Naive thymus-derived CD4-positive, alpha-beta T cell (primary cell): ENCODE measurements at regions of chr1 and their contacts with region 1.

Region 1: DNA sequence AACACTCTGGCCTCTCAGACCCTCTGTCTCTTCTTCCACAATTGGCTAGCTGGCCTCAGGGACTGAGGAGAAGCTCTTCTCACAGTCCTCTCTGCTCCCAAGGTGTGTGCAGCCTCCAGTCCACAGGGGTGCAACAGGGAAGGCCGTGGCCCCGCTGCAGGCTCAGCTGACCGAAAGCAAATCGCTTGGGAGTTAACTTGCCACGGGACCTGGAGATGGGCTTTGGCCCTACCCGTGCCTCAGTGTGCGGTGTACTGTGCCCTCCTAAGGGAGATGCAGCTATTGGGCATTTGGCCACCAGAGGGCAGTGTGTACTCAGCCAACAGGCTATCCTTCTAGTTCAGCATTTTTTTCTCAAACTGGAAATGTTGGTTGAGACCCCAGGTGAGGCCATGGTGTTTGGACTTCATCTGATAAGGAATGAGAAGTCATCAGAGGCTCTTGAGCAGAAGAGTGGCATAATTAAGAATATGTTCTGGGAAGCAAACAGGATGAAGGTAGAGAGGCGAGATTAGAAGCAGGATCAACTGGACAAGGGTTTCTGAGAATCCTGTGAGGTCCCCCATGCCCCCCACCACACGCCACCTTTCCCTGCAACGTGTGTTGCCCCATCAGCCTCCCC is 42.5 kb upstream of the TMEM125 start:
- DNase-seq: peak; percentile 50 to 86 (median 76)
- ATAC-seq: peak; percentile 94
- H3K4me3 ChIP-seq: no peak overlapping the region
- H3K4me3 Mint-ChIP-seq: no peak overlapping the region
- H3K27ac ChIP-seq: no peak overlapping the region
- H3K27ac Mint-ChIP-seq: peak overlapping the region in 3 of 9 donors; percentile 20 to 41 (median 33)
- H3K4me1 ChIP-seq: no peaks in the 10 kb centered on the region
- H3K4me1 Mint-ChIP-seq: peaks cover 0 to 8% (median 0%) of the 10 kb centered on the region in 7 donors
- H3K27me3 ChIP-seq: no peaks in the 10 kb centered on the region
- H3K27me3 Mint-ChIP-seq: peaks cover 0 to 17% (median 0%) of the 10 kb centered on the region in 5 donors

Region 2: GRCh38 chr1:42913426-42914091 is 313.7 kb before region 1 on chr1:
- CTCF ChIA-PET with region 1: interaction called, 3 read pairs
- POLR2A ChIA-PET with region 1: no interaction called
- intact Hi-C with region 1: loop called in 1 of 2 experiments (anchors 5 kb)
- DNase-seq: peak in 7 of 9 donors; percentile 54 to 84 (median 76)
- ATAC-seq: peak; percentile 94
- H3K4me3 ChIP-seq: no peak overlapping the region
- H3K4me3 Mint-ChIP-seq: no peak overlapping the region
- H3K27ac ChIP-seq: no peak overlapping the region
- H3K27ac Mint-ChIP-seq: no peak overlapping the region
- H3K4me1 ChIP-seq: no peaks in the 10 kb centered on the region
- H3K4me1 Mint-ChIP-seq: peaks cover 0 to 5% (median 4%) of the 10 kb centered on the region in 7 donors
- H3K27me3 ChIP-seq: no peaks in the 10 kb centered on the region
- H3K27me3 Mint-ChIP-seq: peaks cover 0 to 8% (median 0%) of the 10 kb centered on the region in 5 donors

Region 3: DNA sequence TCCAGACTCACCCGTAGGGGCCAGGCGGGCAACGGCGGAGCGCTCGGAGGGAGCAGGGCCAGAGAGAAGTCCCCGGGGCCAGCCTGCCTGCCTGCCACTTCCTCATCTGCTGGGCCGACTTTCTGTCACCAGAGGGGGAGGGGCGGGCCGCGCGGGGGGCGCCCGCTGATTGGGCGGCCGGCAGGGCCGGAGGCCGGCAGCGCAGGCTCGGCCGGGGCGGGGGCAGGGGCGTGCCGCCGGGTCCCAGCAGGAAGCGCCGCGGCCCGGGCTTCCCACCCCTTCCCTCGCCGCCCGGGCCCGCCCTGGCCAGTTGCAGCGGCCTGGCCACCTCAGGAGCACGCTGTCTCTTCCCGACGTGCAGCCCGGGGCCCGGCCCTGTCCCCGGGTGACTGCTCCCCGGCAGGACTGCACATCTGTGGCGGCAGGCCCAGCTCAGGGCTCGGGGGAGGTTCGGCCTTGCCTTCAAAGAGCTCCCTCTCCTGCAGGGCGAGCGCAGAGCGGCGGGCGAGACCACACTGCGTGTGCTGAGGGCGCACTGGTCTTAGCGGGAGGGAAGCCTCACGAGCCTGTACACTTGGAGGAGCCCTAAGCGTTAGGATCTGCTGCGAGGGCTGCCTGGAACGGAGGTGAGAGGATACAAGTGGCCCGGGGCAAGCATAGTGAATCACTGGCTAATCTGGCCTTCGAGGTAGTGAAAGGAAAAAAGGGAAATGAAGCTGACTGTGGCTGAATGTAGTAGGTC is 140.8 kb after region 1 on chr1 and contains the start of gene ELOVL1:
- CTCF ChIA-PET with region 1: interaction called, 3 read pairs
- POLR2A ChIA-PET with region 1: no interaction called
- intact Hi-C with region 1: loop called in 1 of 2 experiments (anchors 1 kb)
- DNase-seq: peak; percentile 40 to 94 (median 58)
- ATAC-seq: peak; percentile 91
- H3K4me3 ChIP-seq: peak within 1 kb of the TSS; percentile 89
- H3K4me3 Mint-ChIP-seq: peak within 1 kb of the TSS; percentile 86 to 97 (median 92)
- H3K27ac ChIP-seq: peak within 1 kb of the TSS; percentile 90
- H3K27ac Mint-ChIP-seq: peak within 1 kb of the TSS; percentile 88 to 95 (median 91)
- H3K4me1 ChIP-seq: peaks cover 13 to 22% of the 10 kb centered on the region in 2 donors
- H3K4me1 Mint-ChIP-seq: peaks cover 24 to 47% (median 42%) of the 10 kb centered on the region in 7 donors
- H3K27me3 ChIP-seq: no peaks in the 10 kb centered on the region
- H3K27me3 Mint-ChIP-seq: no peaks in the 10 kb centered on the region
- total RNA-seq, gene ELOVL1: 25.9 to 65.3 (median 32.3) TPM

Region 4: DNA sequence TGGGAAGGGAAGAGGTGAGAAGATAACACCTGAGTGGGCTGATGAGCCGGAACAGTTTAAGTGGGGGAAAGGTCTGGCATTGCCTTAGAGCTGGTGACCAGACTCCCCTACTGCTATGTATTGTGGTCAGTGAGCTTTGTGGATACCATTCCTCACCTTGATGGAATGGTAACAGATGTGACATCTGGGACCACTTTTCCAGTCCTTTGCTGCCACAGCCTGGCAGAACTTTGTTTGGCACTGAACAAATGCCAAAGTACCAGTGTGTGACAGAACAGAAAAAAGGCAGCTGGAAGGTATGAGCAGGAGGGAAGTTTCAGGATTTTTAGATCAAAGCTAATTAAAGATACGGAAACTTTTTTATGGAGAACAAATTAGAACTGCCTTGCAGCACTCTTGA is 156.2 kb after region 1 on chr1:
- CTCF ChIA-PET with region 1: interaction called, 4 read pairs
- POLR2A ChIA-PET with region 1: no interaction called
- intact Hi-C with region 1: loop called in 1 of 2 experiments (anchors 1 kb)
- DNase-seq: no peak
- ATAC-seq: no peak
- H3K4me3 ChIP-seq: no peak overlapping the region
- H3K4me3 Mint-ChIP-seq: no peak overlapping the region
- H3K27ac ChIP-seq: no peak overlapping the region
- H3K27ac Mint-ChIP-seq: peak overlapping the region in 1 of 9 donors; percentile 37
- H3K4me1 ChIP-seq: peaks cover 5 to 6% of the 10 kb centered on the region in 2 donors
- H3K4me1 Mint-ChIP-seq: peaks cover 19 to 43% (median 26%) of the 10 kb centered on the region in 7 donors
- H3K27me3 ChIP-seq: no peaks in the 10 kb centered on the region
- H3K27me3 Mint-ChIP-seq: no peaks in the 10 kb centered on the region

Region 5: DNA sequence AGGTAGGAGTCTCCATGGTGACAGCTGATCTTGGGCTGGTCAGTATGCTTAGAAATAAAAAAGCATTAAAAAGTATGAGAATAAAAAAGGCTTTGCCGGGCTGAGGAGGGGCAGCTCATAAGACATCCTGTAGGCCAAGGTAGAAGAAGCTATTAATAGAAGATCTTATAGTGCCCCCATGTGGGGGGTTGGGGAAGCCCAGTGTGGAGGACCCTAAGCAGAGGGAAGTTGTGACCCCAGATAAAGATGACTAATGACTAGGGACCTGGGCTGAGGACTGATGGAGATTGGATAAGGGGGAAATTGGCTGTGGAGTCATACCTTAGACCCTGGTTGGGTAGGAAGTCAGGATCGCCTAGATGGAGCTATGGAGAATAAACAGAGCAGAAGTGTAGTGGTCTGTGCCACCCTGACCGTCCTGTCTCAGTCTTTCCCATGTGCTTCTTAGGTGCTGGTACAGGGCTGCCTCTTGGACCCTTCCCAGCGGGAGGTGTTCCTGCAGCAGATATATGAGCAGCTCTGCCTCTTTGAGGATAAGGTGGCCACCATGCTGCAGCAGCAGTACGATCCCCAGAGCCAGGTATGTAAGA is 187.5 kb after region 1 on chr1:
- CTCF ChIA-PET with region 1: interaction called, 60 read pairs
- POLR2A ChIA-PET with region 1: interaction called, 10 read pairs
- intact Hi-C with region 1: loop called (anchors 1 kb)
- DNase-seq: peak; percentile 31 to 80 (median 71)
- ATAC-seq: peak; percentile 95
- H3K4me3 ChIP-seq: no peak overlapping the region
- H3K4me3 Mint-ChIP-seq: no peak overlapping the region
- H3K27ac ChIP-seq: no peak overlapping the region
- H3K27ac Mint-ChIP-seq: peak overlapping the region in 5 of 9 donors; percentile 6 to 38 (median 24)
- H3K4me1 ChIP-seq: no peaks in the 10 kb centered on the region
- H3K4me1 Mint-ChIP-seq: peaks cover 0 to 10% (median 3%) of the 10 kb centered on the region in 7 donors
- H3K27me3 ChIP-seq: no peaks in the 10 kb centered on the region
- H3K27me3 Mint-ChIP-seq: no peaks in the 10 kb centered on the region

Region 6: GRCh38 chr1:43934101-43934985 is 707.1 kb after region 1 on chr1:
- CTCF ChIA-PET with region 1: no interaction called
- POLR2A ChIA-PET with region 1: no interaction called
- intact Hi-C with region 1: loop called in 1 of 2 experiments (anchors 10 kb)
- DNase-seq: peak in 6 of 9 donors; percentile 29 to 68 (median 44)
- ATAC-seq: peak; percentile 82
- H3K4me3 ChIP-seq: no peak overlapping the region
- H3K4me3 Mint-ChIP-seq: peak overlapping the region in 8 of 10 donors; percentile 12 to 70 (median 46)
- H3K27ac ChIP-seq: no peak overlapping the region
- H3K27ac Mint-ChIP-seq: no peak overlapping the region
- H3K4me1 ChIP-seq: peaks cover 0 to 9% of the 10 kb centered on the region in 2 donors
- H3K4me1 Mint-ChIP-seq: peaks cover 10 to 29% (median 14%) of the 10 kb centered on the region in 7 donors
- H3K27me3 ChIP-seq: peaks cover 9 to 19% of the 10 kb centered on the region in 2 donors
- H3K27me3 Mint-ChIP-seq: peaks cover 21 to 29% (median 26%) of the 10 kb centered on the region in 5 donors

Region 7: DNA sequence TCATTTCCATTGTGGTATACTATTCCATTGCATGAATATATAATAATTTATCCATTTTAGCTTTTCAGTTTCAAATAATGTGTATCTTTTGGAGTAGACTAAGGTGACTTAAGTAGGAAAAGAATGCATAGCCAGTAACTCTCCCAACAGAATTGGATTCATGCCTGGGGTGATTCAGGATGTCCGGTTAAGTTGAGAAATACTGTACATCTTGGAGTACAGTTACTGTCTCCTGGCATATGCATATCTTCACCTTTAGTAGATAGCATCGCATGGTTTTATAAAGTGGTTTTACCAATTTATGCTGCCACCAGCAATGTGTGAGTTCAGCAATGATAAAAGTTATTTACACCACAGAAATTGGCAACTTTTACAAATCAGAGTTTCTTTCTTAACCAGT is 822.6 kb after region 1 on chr1:
- CTCF ChIA-PET with region 1: no interaction called
- POLR2A ChIA-PET with region 1: no interaction called
- intact Hi-C with region 1: no loop called
- DNase-seq: no peak
- ATAC-seq: no peak
- H3K4me3 ChIP-seq: no peak overlapping the region
- H3K4me3 Mint-ChIP-seq: no peak overlapping the region
- H3K27ac ChIP-seq: no peak overlapping the region
- H3K27ac Mint-ChIP-seq: no peak overlapping the region
- H3K4me1 ChIP-seq: no peaks in the 10 kb centered on the region
- H3K4me1 Mint-ChIP-seq: peaks cover 0 to 14% (median 5%) of the 10 kb centered on the region in 7 donors
- H3K27me3 ChIP-seq: no peaks in the 10 kb centered on the region
- H3K27me3 Mint-ChIP-seq: peaks cover 2 to 19% (median 5%) of the 10 kb centered on the region in 5 donors